Right lobe of liver (tissue), 6 donors: ENCODE measurements at regions of chr9 and their contacts with region 1.

Region 1: GRCh38 chr9:11546231-11546630 is 933.4 kb upstream of the PTPRD start:
- DNase-seq: no peak
- ATAC-seq: no peak
- H3K4me3 ChIP-seq: no peak overlapping the region
- H3K27ac ChIP-seq: no peak overlapping the region
- H3K4me1 ChIP-seq: no peaks in the 10 kb centered on the region
- H3K27me3 ChIP-seq: no peaks in the 10 kb centered on the region
- CTCF ChIP-seq: no peak
- POLR2A ChIP-seq: no peak

Region 2: GRCh38 chr9:11632691-11633090 is 86.5 kb after region 1 on chr9:
- intact Hi-C with region 1: loop called in 1 of 2 experiments (anchors 10 kb)
- DNase-seq: no peak
- ATAC-seq: no peak
- H3K4me3 ChIP-seq: no peak overlapping the region
- H3K27ac ChIP-seq: no peak overlapping the region
- H3K4me1 ChIP-seq: no peaks in the 10 kb centered on the region
- H3K27me3 ChIP-seq: no peaks in the 10 kb centered on the region
- CTCF ChIP-seq: no peak
- POLR2A ChIP-seq: no peak